PC-3 (cell line): ENCODE measurements at regions of chr19 and their contacts with region 1.

Region 1: DNA sequence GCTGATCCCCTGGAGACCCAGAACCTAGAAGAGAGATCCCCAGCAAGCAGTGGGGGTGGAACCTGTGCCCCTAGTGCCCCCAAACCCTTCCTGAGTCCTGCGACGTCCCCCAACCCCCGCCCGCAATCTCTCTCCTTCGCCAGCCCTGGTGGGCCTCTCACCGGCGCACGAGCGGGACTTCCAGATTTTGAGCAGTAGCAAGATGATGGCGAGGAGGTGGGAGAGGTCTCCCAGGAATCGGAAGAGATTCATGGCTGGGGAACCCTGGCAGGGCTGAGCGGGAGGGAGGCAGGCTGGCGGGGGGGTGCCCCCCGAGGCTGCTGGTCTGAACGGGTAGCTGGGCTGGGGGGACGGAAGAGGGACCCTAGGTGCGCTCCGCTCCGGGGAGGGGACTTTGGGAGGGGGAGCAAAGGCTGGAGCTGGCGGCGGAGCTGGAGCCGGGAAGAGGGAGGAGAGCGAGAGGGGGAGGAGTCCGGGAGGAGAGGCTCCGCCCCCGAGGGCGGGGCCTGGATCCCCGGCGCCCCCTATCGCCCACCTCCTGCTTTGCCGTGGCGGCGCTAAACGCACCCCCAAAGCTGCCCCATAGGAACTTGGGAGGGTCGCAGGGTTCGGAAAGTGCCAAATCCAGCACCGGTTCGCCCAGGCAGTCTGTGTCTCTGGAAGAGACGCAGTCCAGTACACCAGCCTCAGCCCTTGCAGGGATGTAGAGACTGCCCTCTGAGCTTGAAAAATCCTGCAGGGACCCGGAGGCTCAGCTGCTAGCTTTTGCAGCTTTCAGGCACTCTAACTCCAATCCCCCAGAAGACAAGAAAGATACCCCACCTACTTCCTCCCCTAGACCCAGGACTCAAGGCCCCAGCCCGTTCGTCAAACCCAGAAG is at the start of gene KDELR1:
- DNase-seq: peak; percentile 64
- ATAC-seq: peak; percentile 66
- H3K4me3 ChIP-seq: peak within 1 kb of the TSS; percentile 99
- H3K27ac ChIP-seq: peak within 1 kb of the TSS; percentile 59
- H3K4me1 ChIP-seq: peaks cover 3% of the 10 kb centered on the region; the same call in 1 of the 2 replicates
- H3K27me3 ChIP-seq: no peaks in the 10 kb centered on the region; the same call in 1 of the 2 replicates
- CTCF ChIP-seq: peak; percentile 75
- total RNA-seq, gene KDELR1: 90.2 and 101 TPM in 2 replicates

Region 2: DNA sequence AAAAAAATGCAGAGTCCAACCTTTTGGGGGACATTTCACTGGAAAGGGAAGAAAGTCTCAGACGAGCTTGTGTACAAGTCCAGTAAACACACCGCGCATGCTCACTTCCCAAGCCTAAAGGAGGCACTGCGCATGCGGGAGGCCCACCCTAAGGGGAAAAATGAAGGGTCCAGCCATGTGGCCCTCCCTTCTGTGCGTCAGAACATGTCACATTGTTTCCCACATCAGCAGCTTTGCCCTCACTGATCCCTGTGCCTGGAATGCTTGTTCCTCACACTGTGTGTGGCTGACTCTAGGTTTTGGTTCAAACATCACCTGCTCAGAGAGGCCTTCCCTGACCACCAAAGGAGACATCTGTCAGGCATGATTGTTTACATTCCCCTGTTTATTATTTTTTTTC is 392.5 kb before region 1 on chr19:
- CTCF ChIA-PET with region 1: no interaction called
- POLR2A ChIA-PET with region 1: no interaction called
- intact Hi-C with region 1: no loop called
- DNase-seq: no peak
- ATAC-seq: no peak
- H3K4me3 ChIP-seq: no peak overlapping the region
- H3K27ac ChIP-seq: no peak overlapping the region
- H3K4me1 ChIP-seq: no peaks in the 10 kb centered on the region
- H3K27me3 ChIP-seq: no peaks in the 10 kb centered on the region
- CTCF ChIP-seq: no peak

Region 3: DNA sequence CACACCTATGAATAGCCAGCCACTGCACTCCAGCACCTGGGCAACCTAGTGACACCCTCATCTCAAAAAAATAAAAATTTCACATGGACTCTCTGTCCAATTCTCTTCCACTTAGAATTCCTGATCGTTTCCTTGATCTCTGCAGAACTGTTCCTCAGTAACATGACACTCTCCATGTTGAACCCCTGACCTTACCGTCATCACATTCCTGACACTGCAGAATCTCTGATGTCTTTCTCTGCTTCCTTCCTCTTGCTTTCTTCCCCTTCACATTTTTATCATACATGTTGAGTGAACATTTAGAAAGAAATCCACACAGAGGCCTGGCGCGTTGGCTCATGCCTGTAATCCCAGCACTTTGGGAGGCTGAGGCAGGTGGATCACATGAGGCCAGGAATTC is 106.5 kb before region 1 on chr19:
- CTCF ChIA-PET with region 1: no interaction called
- POLR2A ChIA-PET with region 1: no interaction called
- intact Hi-C with region 1: no loop called
- DNase-seq: no peak
- ATAC-seq: no peak
- H3K4me3 ChIP-seq: no peak overlapping the region
- H3K27ac ChIP-seq: no peak overlapping the region
- H3K4me1 ChIP-seq: no peaks in the 10 kb centered on the region
- H3K27me3 ChIP-seq: no peaks in the 10 kb centered on the region
- CTCF ChIP-seq: no peak

Region 4: GRCh38 chr19:48321622-48322591 is 69.4 kb before region 1 on chr19:
- CTCF ChIA-PET with region 1: no interaction called
- POLR2A ChIA-PET with region 1: no interaction called
- intact Hi-C with region 1: loop called (anchors 2 kb)
- DNase-seq: peak; percentile 96
- ATAC-seq: peak; percentile 61
- H3K4me3 ChIP-seq: peak overlapping the region; percentile 74
- H3K27ac ChIP-seq: peak overlapping the region; percentile 88
- H3K4me1 ChIP-seq: peaks cover 42% of the 10 kb centered on the region
- H3K27me3 ChIP-seq: no peaks in the 10 kb centered on the region
- CTCF ChIP-seq: no peak

Region 5: GRCh38 chr19:48363810-48364563 is 27.4 kb before region 1 on chr19 and contains the starts of genes SYNGR4 and TMEM143:
- CTCF ChIA-PET with region 1: interaction called, 17 read pairs
- POLR2A ChIA-PET with region 1: no interaction called
- intact Hi-C with region 1: no loop called
- DNase-seq: peak; percentile 97
- ATAC-seq: peak; percentile 82
- H3K4me3 ChIP-seq: peak within 1 kb of the TSS; percentile 66
- H3K27ac ChIP-seq: peak within 1 kb of the TSS; percentile 42
- H3K4me1 ChIP-seq: peaks cover 5% of the 10 kb centered on the region; the same call in 1 of the 2 replicates
- H3K27me3 ChIP-seq: no peaks in the 10 kb centered on the region
- CTCF ChIP-seq: no peak
- total RNA-seq, gene SYNGR4: not detected in 2 replicates
- total RNA-seq, gene TMEM143: 1.3 and 7.1 TPM in 2 replicates

Region 6: DNA sequence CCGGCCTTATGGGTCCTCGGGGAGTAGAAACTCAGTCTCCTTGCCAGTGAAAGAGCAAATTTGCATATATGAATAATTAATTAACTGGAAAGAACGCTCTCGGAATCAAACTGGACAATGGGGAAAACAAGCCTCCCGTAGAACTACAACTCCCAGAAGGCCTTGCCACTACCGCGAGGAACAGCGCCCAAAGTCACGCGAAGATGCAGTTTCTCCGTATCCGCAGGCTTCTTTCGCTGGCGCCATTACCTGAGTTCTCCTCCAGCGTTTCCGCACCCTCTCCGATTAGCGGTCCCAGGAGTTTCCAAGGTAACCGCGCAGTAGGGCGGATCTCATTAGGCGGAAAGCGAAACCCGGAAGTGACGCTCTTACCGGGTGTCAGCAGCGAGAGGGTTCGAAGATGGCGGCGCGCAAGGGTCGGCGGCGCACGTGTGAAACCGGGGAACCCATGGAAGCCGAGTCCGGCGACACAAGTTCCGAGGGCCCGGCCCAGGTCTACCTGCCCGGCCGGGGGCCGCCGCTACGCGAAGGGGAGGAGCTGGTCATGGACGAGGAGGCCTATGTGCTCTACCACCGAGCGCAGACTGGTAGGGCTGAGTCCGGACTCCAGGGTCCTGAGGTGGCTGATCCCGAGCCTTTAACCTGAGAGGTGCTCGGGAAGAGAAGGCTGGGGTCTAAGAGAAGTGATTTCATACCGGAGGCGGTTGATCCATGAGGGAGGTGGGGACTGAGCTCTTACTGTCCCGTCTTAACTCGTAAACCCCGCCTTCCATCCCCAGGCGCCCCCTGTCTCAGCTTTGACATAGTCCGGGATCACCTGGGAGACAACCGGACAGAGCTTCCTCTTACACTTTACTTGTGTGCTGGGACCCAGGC is 54.5 kb after region 1 on chr19 and contains the start of gene GRWD1:
- CTCF ChIA-PET with region 1: no interaction called
- POLR2A ChIA-PET with region 1: no interaction called
- intact Hi-C with region 1: loop called (anchors 5 kb)
- DNase-seq: peak; percentile 94
- ATAC-seq: peak; percentile 89
- H3K4me3 ChIP-seq: peak within 1 kb of the TSS; percentile 87
- H3K27ac ChIP-seq: peak within 1 kb of the TSS; percentile 73
- H3K4me1 ChIP-seq: peaks cover 18% of the 10 kb centered on the region
- H3K27me3 ChIP-seq: no peaks in the 10 kb centered on the region
- CTCF ChIP-seq: peak; percentile 22; the same call in 1 of the 2 replicates
- total RNA-seq, gene GRWD1: 33.2 and 46.7 TPM in 2 replicates